ENCODE measurements at regions of chr11 and their contacts with region 1.

Region 1: GRCh38 chr11:31958076-31958735 is 132.7 kb upstream of the RCN1 start:
- DNase-seq: peak; percentile 90
- ATAC-seq: peak; percentile 90
- H3K4me3 Mint-ChIP-seq: no peak overlapping the region
- H3K27ac Mint-ChIP-seq: no peak overlapping the region
- H3K4me1 Mint-ChIP-seq: peaks cover 6% of the 10 kb centered on the region
- H3K27me3 Mint-ChIP-seq: peaks cover 12% of the 10 kb centered on the region
- CTCF ChIP-seq: peak; percentile 90

Region 2: DNA sequence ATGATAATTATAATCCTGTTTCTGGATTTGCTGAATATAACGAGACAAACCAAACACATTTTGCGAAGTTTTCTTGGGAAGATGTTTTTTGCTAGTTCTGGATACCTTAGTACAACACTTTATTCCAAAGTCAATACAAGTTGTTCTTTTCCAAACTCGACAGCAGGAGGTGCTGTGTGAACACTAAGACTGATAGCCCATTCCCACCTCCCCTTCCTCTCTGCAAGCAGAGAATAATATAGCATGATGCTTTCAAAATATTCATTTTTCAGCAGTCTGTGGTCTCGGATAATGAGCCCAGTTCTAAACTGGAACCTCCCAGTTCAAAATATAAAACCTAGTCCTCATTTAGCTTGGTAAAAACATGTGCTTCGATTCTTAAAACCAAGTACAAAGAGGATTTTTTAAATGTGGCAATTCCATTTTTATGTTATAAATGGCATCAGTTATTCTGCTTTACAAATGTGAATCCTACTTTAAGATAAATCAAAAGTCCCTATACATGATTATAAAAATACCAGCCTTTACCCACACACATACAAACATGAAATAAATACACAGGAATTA is 717.8 kb before region 1 on chr11:
- CTCF ChIA-PET with region 1: interaction called, 13 read pairs
- POLR2A ChIA-PET with region 1: no interaction called
- DNase-seq: peak; percentile 39
- ATAC-seq: peak; percentile 87
- H3K4me3 Mint-ChIP-seq: no peak overlapping the region
- H3K27ac Mint-ChIP-seq: 0 out of 2 replicates have a peak overlapping the region, but pooled peaks have one; percentile 38
- H3K4me1 Mint-ChIP-seq: peaks cover 54% of the 10 kb centered on the region
- H3K27me3 Mint-ChIP-seq: no peaks in the 10 kb centered on the region
- CTCF ChIP-seq: 0 out of 2 replicates have a peak, but pooled peaks have one; percentile 37

Region 3: DNA sequence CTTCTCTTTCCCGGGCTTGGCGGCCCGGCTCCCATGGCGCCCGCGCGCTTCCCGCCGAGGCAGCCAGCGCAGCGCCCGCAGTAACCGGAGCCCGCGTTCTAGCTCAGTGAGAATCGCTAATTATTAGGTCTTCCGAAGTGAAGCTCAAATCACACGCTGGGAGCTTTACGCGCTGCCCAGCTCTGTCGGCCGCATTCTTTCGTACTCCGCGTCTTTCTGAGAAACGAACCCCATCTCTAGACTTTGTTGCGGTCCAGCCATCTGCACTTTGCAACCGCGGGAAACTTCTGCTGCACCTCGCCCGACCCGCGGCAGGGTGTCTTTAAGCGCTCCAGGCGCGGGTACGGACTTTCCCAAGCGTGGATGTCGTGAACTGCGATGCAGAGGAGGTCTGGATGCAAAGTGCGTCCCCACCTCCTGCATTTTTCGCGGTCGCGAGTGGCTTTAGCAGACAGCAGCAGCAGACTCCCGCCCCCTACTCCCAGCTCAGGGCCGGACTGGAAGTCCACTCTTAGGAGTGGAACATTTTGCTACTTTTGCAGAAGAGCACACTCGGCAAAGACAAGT is 141.1 kb before region 1 on chr11:
- CTCF ChIA-PET with region 1: interaction called, 21 read pairs
- POLR2A ChIA-PET with region 1: no interaction called
- DNase-seq: peak; percentile 19
- ATAC-seq: no peak
- H3K4me3 Mint-ChIP-seq: peak overlapping the region; percentile 62
- H3K27ac Mint-ChIP-seq: no peak overlapping the region
- H3K4me1 Mint-ChIP-seq: peaks cover 64% of the 10 kb centered on the region
- H3K27me3 Mint-ChIP-seq: peaks cover 100% of the 10 kb centered on the region
- CTCF ChIP-seq: no peak

Region 4: DNA sequence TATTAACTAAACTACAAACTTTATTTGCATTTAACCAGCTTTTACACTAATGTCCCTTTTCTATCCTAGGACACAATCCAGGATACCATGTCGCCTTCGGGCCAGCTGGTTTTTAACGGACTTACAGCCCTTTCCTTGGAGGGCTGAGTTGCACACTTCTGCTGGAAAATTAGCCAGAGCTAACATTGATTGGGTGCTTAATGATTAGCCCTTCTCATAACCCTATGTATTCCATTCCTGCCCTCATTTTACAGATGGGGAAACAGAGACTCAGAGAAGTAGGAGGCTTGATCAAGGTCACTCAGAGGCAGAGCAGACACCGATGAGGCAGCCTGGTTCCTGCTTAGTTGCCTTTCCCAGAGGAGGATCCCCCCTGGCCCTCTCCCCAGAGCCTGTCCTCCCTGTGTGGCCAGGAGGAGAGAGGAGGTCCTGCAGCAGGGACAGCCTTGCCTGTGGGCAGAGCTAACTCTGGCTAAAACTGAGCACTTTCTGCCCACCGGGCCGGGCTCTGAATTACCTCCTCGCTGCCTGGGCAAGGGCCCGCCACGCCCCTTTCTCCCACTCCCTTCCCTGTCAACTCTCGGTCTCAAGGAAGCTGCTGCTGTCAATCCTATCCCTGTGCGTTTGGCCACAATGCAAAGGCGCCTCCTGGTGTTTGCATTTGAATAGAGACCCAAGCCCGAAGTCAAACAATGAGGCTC is 87.4 kb before region 1 on chr11:
- CTCF ChIA-PET with region 1: interaction called, 22 read pairs
- POLR2A ChIA-PET with region 1: no interaction called
- DNase-seq: peak; percentile 87
- ATAC-seq: peak; percentile 90
- H3K4me3 Mint-ChIP-seq: peak overlapping the region; percentile 47
- H3K27ac Mint-ChIP-seq: no peak overlapping the region
- H3K4me1 Mint-ChIP-seq: peaks cover 30% of the 10 kb centered on the region
- H3K27me3 Mint-ChIP-seq: peaks cover 31% of the 10 kb centered on the region
- CTCF ChIP-seq: 0 out of 2 replicates have a peak, but pooled peaks have one; percentile 39

Region 5: DNA sequence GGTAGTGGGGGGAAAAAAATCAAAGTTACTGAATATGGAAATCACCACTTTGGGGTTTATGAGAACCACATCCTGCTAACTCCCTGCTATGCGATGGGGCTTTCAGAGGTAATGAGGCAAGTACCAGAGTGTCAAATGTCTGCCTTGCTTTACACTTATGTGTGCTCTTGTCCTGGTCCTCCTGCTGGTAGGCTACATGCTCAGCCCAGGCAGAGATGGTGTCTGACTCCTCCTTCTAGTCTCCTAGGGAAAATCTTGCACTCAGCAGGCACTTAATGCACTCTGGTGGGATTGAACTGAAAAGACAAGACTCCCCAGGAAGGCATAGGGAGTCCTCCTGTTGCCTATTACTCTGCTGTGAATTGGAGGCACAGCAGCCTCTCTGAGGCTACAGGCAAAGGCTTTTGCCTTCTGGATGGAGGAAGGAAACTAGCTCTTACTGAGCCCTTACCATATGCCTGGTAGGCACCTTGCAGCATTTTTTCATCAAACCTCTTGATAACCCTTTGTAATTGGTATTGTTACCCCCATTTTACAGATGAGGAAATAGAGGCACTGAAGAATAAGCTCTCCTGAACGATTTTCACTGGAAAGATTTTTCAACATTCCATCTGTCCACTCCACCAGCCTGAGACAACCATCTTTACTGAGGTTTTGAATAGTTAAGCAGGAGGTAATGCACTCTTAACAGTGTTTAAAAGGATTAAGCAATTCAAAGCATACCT is 15.0 kb before region 1 on chr11:
- CTCF ChIA-PET with region 1: interaction called, 16 read pairs
- POLR2A ChIA-PET with region 1: no interaction called
- DNase-seq: no peak
- ATAC-seq: peak; percentile 94
- H3K4me3 Mint-ChIP-seq: no peak overlapping the region
- H3K27ac Mint-ChIP-seq: no peak overlapping the region
- H3K4me1 Mint-ChIP-seq: peaks cover 12% of the 10 kb centered on the region
- H3K27me3 Mint-ChIP-seq: peaks cover 3% of the 10 kb centered on the region; the same call in 1 of the 2 replicates
- CTCF ChIP-seq: no peak

Region 6: GRCh38 chr11:31997952-31998351 is 39.7 kb after region 1 on chr11:
- CTCF ChIA-PET with region 1: interaction called, 10 read pairs
- POLR2A ChIA-PET with region 1: no interaction called
- DNase-seq: no peak
- ATAC-seq: peak; percentile 57
- H3K4me3 Mint-ChIP-seq: no peak overlapping the region
- H3K27ac Mint-ChIP-seq: no peak overlapping the region
- H3K4me1 Mint-ChIP-seq: peaks cover 2% of the 10 kb centered on the region; the same call in 1 of the 2 replicates
- H3K27me3 Mint-ChIP-seq: peaks cover 3% of the 10 kb centered on the region; the same call in 1 of the 2 replicates
- CTCF ChIP-seq: no peak

Region 7: DNA sequence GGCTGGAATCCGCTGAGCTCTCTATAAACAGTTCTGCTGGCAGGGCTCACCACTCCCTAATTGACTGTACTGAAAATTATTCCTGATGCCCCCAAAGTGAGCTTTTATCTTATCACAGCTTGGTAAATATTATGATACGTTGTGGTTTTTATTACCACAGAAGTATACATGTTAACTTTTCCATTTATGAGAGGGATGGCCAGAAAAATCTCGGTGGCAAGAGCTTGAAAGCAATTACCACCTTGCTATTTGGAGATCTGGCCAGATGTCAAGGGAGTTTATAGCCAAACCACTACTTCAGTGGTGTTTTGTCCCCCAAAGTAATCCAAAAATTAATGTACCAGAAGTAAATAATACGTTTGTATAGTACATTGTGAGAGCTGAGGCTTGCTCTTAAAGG is 57.2 kb after region 1 on chr11:
- CTCF ChIA-PET with region 1: no interaction called
- POLR2A ChIA-PET with region 1: no interaction called
- DNase-seq: no peak
- ATAC-seq: no peak
- H3K4me3 Mint-ChIP-seq: no peak overlapping the region
- H3K27ac Mint-ChIP-seq: no peak overlapping the region
- H3K4me1 Mint-ChIP-seq: no peaks in the 10 kb centered on the region
- H3K27me3 Mint-ChIP-seq: no peaks in the 10 kb centered on the region; the same call in 1 of the 2 replicates
- CTCF ChIP-seq: no peak

Measured in WTC11 (cell line).